ENCODE measurements at regions of chr12 and their contacts with region 1.

Region 1: DNA sequence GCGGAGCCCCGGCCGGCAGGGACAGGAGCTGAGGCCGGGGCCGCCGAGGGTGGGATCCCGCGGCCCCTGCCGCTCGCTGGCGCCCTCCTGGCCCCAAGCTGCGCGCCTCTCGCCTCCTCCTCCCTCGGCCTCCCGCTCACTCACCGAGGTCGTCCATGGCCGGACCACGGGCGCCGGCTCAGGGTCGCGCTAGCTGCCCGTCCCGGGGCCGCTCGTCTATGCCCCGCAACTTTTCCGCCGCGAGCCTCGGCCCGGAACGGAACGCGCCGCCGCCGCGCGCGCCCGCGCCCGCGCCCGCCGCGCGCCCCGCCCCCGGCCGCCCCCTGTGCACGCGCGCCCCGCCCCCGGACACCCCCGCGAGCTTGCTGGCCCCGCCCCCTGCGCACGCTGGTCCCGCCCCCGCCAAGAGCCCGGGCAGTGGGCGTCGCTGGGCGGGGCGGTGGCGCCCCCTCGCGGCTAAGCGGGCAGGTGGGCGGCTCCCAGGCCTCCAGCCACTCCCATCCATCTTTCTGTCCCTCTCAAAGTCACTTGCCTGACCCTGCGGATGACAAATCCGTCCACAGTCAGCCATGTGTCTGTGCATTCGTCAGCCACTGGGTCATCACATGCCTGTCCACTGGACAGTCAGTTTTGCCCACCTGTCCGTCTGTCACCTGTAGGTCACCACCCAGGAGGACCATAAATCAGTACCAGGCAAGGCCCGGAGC is at the start of gene PXN:
- DNase-seq: peak; percentile 84 to 93 (median 89)
- H3K4me3 ChIP-seq: peak within 1 kb of the TSS; percentile 59 to 85
- H3K4me3 Mint-ChIP-seq: peak within 1 kb of the TSS; percentile 89 to 100 (median 94)
- H3K27ac ChIP-seq: peak within 1 kb of the TSS; percentile 81
- H3K27ac Mint-ChIP-seq: peak within 1 kb of the TSS; percentile 92 to 98 (median 96)
- H3K4me1 ChIP-seq: peaks cover 44% of the 10 kb centered on the region
- H3K4me1 Mint-ChIP-seq: peaks cover 24 to 51% (median 37%) of the 10 kb centered on the region in 4 donors
- H3K27me3 ChIP-seq: no peaks in the 10 kb centered on the region
- H3K27me3 Mint-ChIP-seq: no peaks in the 10 kb centered on the region
- total RNA-seq, gene PXN: 108 to 126 TPM

Region 2: DNA sequence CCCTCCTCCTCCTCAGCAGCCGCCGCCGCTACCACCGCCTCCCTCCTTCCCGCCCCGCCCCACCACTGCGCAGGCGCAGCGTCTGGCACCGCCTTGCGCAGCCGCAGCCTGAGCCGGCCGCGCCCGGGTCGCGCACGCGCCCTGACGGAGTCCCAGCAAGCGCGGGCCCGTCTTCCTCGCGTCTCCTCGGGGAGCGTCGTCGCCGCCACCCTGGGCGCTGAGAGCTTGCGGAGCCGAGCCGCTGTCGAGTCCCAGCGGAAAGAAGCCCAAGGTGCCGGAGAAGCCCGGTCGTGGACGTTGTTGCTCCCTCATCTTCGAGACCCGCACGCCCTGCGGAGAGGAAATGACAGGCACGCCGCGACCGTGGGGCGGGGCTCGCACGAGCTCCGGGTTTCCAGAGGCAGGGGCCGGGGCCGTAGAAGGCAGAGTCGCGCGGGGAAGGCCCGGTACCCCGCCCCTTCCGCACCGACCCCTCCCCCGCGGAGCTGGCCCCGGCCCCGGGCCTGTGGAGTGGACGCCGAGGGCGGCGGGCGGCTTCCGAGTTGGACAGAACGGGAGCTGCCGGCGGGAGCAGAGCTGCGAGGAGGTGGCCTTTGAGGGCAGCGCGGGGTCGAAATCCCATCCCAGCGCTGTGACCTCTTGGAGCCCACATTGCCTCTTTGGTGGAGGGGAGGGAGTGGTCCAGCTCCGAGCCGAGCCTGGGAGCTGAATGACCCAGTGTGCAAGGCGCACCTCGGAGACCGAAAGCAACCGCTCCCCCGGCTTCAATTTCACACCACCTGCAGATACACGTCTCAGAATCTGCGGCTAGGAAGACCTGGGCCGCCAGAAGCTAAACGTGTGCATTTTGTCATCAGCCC is 148.6 kb before region 1 on chr12:
- CTCF ChIA-PET with region 1: interaction called, 3 read pairs
- POLR2A ChIA-PET with region 1: interaction called, 10 read pairs
- intact Hi-C with region 1: no loop called
- DNase-seq: peak; percentile 95 to 99 (median 97)
- H3K4me3 ChIP-seq: peak overlapping the region; percentile 75 to 80
- H3K4me3 Mint-ChIP-seq: peak overlapping the region; percentile 86 to 98 (median 90)
- H3K27ac ChIP-seq: peak overlapping the region; percentile 83
- H3K27ac Mint-ChIP-seq: peak overlapping the region; percentile 85 to 99 (median 94)
- H3K4me1 ChIP-seq: peaks cover 84% of the 10 kb centered on the region
- H3K4me1 Mint-ChIP-seq: peaks cover 59 to 88% (median 76%) of the 10 kb centered on the region in 4 donors
- H3K27me3 ChIP-seq: no peaks in the 10 kb centered on the region
- H3K27me3 Mint-ChIP-seq: no peaks in the 10 kb centered on the region

Region 3: DNA sequence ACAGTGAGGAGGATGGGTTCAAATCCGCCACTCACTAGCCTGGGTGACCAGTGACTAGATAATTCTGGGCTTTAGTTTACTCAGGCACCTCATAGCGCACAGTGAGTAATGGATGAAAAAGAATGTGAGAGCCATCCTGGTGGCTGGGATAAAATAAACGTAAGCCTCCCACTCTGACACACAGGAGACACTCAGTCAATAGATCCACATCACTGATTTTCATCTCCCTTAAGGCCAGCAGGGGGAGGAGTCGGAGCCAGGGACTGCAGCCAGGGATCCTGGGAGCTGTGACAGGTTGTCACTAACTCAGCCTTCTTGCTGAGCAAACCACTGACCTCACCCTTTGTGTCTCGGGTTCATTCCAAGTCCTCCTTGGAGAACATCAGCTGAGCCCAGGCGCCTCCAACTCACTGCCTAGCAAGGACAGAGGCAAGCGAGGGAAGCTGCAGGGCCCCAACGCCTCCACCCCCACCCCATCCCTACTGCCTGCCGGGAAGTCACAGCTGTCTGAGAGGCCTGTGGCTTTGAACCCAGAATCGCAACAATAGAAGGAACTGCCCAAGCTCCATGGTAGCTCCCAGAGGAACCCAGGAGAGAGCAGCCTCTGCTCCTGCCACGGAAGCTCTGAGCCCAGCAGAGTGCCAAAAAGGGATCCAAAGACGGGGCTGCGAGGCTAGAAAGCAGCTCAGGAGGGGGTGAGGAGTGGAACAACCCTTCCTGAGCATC is 30.8 kb before region 1 on chr12:
- CTCF ChIA-PET with region 1: interaction called, 1,075 read pairs
- POLR2A ChIA-PET with region 1: interaction called, 338 read pairs
- intact Hi-C with region 1: no loop called
- DNase-seq: no peak
- H3K4me3 ChIP-seq: no peak overlapping the region
- H3K4me3 Mint-ChIP-seq: peak overlapping the region in 2 of 8 donors; percentile 7 to 39
- H3K27ac ChIP-seq: no peak overlapping the region
- H3K27ac Mint-ChIP-seq: peak overlapping the region; percentile 27 to 92 (median 73)
- H3K4me1 ChIP-seq: peaks cover 94% of the 10 kb centered on the region
- H3K4me1 Mint-ChIP-seq: peaks cover 51 to 96% (median 78%) of the 10 kb centered on the region in 4 donors
- H3K27me3 ChIP-seq: no peaks in the 10 kb centered on the region
- H3K27me3 Mint-ChIP-seq: no peaks in the 10 kb centered on the region

Region 4: GRCh38 chr12:120249875-120250795 is 15.5 kb before region 1 on chr12:
- CTCF ChIA-PET with region 1: interaction called, 192 read pairs
- POLR2A ChIA-PET with region 1: interaction called, 301 read pairs
- intact Hi-C with region 1: loop called (anchors 1 kb)
- DNase-seq: peak; percentile 52 to 61 (median 59)
- H3K4me3 ChIP-seq: peak overlapping the region; percentile 4 to 49
- H3K4me3 Mint-ChIP-seq: peak overlapping the region; percentile 65 to 91 (median 82)
- H3K27ac ChIP-seq: peak overlapping the region; percentile 50
- H3K27ac Mint-ChIP-seq: peak overlapping the region; percentile 81 to 99 (median 95)
- H3K4me1 ChIP-seq: peaks cover 90% of the 10 kb centered on the region
- H3K4me1 Mint-ChIP-seq: peaks cover 67 to 88% (median 78%) of the 10 kb centered on the region in 4 donors
- H3K27me3 ChIP-seq: no peaks in the 10 kb centered on the region
- H3K27me3 Mint-ChIP-seq: no peaks in the 10 kb centered on the region

Region 5: DNA sequence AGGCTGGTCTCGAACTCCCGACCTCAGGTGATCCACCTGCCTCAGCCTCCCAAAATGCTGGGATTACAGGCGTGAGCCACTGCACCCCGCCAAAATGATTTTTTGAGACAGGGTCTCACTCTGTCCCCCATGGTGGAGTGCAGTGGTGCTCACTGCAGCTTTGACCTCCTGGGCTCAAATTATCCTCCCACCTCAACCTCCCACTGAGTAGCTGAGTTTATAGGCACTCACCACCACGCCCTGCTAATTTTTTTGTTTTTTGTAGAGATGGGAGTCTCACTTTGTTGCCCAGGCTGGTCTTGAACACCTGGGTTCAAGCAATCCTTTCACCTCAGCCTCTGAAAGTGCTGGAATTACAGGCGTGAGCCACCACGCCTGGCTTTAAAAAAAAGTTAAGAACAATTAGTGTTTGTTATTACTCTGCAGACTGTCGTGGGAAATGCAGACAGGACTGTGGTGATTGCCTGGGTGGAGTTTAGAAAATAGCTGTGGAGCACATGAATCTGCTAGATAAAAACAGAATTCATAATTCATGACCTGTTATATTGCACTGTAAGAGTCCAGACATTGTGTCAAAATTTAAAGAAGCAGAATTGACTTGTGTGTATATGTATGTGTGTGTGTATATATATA is 163.1 kb after region 1 on chr12:
- CTCF ChIA-PET with region 1: no interaction called
- POLR2A ChIA-PET with region 1: no interaction called
- intact Hi-C with region 1: no loop called
- DNase-seq: no peak
- H3K4me3 ChIP-seq: no peak overlapping the region
- H3K4me3 Mint-ChIP-seq: no peak overlapping the region
- H3K27ac ChIP-seq: no peak overlapping the region
- H3K27ac Mint-ChIP-seq: peak overlapping the region in 1 of 7 donors; percentile 52
- H3K4me1 ChIP-seq: no peaks in the 10 kb centered on the region
- H3K4me1 Mint-ChIP-seq: peaks cover 0 to 4% (median 2%) of the 10 kb centered on the region in 4 donors
- H3K27me3 ChIP-seq: no peaks in the 10 kb centered on the region
- H3K27me3 Mint-ChIP-seq: peaks cover 6 to 10% of the 10 kb centered on the region in 2 donors

Region 6: DNA sequence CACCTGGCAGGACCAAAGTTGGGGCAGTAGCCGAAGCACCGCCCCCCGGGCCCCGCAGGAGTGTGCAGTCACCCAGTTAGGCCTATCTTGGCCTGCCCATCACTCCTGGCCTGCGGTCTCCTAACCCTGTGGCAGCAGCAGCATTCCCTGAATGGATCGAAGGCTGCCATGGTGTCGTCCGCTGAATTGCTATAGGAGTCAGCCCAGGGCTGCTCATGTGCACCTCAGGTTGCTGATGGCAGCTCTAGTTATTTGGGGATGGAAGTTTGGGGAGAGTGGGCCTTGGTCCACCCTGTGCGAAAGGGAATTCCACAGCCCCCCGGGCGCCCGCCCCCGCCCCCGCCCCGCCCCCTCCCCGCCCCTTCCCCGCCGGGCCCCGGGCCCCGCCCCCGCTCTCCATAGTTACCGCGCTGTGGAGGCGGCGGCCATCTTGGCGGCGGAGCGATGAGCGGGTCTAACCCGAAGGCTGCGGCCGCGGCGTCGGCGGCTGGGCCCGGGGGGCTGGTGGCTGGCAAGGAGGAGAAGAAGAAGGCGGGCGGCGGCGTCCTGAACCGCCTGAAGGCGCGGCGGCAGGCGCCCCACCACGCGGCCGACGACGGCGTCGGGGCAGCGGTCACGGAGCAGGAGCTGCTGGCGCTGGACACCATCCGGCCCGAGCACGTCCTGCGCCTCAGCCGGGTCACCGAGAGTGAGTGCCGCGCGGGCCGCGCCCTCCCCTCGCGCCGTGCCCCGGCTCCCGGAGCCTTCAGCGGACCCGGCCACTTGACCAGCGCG is 444.6 kb after region 1 on chr12 and contains the start of gene UNC119B:
- CTCF ChIA-PET with region 1: no interaction called
- POLR2A ChIA-PET with region 1: no interaction called
- intact Hi-C with region 1: no loop called
- DNase-seq: peak; percentile 66 to 78 (median 70)
- H3K4me3 ChIP-seq: peak within 1 kb of the TSS; percentile 49 to 68
- H3K4me3 Mint-ChIP-seq: peak within 1 kb of the TSS; percentile 89 to 96 (median 94)
- H3K27ac ChIP-seq: peak within 1 kb of the TSS; percentile 78
- H3K27ac Mint-ChIP-seq: peak within 1 kb of the TSS; percentile 83 to 98 (median 93)
- H3K4me1 ChIP-seq: peaks cover 26% of the 10 kb centered on the region
- H3K4me1 Mint-ChIP-seq: peaks cover 17 to 41% (median 32%) of the 10 kb centered on the region in 4 donors
- H3K27me3 ChIP-seq: no peaks in the 10 kb centered on the region
- H3K27me3 Mint-ChIP-seq: no peaks in the 10 kb centered on the region
- total RNA-seq, gene UNC119B: 28.7 to 29.1 TPM

Measured in CD4-positive, alpha-beta memory T cell (primary cell).